ENCODE measurements at regions of chr5 and their contacts with region 1.

Region 1: GRCh38 chr5:90783460-90784333 is 225.1 kb downstream of the ADGRV1 start:
- DNase-seq: peak; percentile 21
- CTCF ChIP-seq: peak; percentile 86

Region 2: GRCh38 chr5:90434116-90434714 is 349.5 kb before region 1 on chr5:
- CTCF ChIA-PET with region 1: interaction called, 27 read pairs
- POLR2A ChIA-PET with region 1: no interaction called
- DNase-seq: no peak
- CTCF ChIP-seq: peak; percentile 78

Region 3: GRCh38 chr5:90709323-90710155 is 74.2 kb before region 1 on chr5:
- CTCF ChIA-PET with region 1: interaction called, 24 read pairs
- POLR2A ChIA-PET with region 1: no interaction called
- DNase-seq: peak; percentile 35
- CTCF ChIP-seq: peak; percentile 65

Region 4: GRCh38 chr5:90802474-90803317 is 19.0 kb after region 1 on chr5:
- CTCF ChIA-PET with region 1: interaction called, 13 read pairs
- POLR2A ChIA-PET with region 1: no interaction called
- DNase-seq: peak; percentile 42
- CTCF ChIP-seq: peak; percentile 80

Region 5: DNA sequence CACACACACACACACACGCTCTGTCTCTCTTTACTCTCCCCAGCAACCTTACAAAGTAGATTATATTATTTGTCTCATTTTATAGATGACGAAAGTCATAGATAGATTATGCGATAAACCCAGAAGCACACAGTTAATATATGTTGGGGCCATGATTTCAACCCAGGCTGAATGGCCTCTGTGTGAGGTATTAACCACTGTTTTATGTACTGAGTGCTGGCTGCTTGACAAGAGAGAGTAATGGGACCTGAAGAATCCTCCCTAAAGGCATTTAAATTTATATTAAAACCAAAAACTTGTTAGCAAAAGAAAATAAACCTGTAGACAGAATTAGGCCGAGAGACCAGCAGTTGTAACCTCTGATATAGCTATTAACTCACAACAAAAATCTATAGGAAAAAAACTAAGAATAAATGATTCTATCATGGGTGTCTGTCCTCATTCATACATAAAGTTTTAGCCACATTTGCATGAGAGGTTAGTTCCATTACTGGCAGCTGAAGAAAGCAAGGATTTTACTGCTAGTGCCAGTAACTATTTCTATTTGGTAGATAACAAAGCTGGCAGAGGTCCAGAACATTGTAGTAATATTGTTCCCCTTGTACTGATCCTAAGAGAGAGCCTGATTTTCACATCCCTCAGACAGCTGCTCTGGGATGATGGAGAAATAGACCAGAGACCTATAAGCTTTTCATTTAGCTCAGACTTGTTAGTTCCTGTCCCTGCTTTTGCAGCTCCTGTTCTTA is 25.8 kb after region 1 on chr5:
- CTCF ChIA-PET with region 1: interaction called, 13 read pairs
- POLR2A ChIA-PET with region 1: no interaction called
- DNase-seq: no peak
- CTCF ChIP-seq: no peak